Activated CD4-positive, alpha-beta T cell treated with anti-CD3 and anti-CD28 coated beads, Interleukin-2, amount 10 ng/mL, durations not matched to agents 24 days and 14 days (primary cell): ENCODE measurements at regions of chr2 and their contacts with region 1.

Region 1: GRCh38 chr2:85266146-85267041 is 61.4 kb downstream of the TGOLN2 start:
- DNase-seq: peak; percentile 91
- H3K4me3 Mint-ChIP-seq: no peak overlapping the region
- H3K27ac Mint-ChIP-seq: no peak overlapping the region
- H3K4me1 Mint-ChIP-seq: peaks cover 2% of the 10 kb centered on the region
- H3K27me3 Mint-ChIP-seq: peaks cover 29% of the 10 kb centered on the region

Region 2: DNA sequence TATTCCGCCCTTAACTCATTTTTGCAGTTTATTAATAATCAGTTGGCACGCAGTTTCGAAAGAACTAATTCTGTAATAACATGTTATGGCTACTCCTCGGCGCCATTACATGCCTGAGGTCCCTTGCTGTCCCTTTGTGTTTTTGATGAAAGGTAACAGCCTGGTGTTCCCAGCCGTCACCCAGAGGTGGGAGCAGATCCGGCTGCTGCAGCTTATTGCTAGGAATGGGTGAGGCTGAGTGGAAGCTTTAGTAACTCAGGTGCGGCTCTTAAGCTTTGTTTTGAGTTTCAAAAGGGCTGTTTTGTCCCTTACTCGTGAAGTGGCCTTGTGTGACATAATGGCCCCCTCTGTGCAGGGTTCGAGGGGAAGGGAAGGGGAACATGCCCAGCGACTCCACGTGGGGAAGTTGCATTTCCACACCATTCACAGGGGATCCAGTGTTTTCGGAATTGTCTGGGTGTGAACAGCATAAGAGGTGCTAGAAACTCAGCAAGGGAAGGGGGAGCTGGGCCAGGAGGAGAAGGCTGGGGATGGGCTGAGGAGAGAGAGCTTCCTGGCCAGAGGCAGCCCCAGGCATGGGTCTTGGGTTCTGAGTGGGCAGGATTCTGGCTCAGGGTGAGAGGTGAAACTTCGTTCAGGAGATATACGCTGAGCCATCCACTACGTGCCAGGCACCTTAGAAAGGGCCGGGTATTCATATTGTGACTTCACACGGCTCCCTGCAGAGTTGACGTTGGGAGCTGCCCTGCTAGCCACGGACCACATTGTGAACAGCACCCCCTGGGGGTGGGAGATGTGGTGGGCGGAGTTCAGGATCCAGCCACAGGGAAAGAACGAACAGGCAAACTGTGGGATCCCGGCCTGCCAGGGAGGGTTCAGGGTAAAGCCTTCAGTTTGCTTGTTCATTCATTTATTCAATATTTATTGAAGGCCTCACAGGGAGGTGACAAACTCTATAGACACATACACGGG is 23.0 kb before region 1 on chr2:
- intact Hi-C with region 1: no loop called
- DNase-seq: peak; percentile 73
- H3K4me3 Mint-ChIP-seq: no peak overlapping the region
- H3K27ac Mint-ChIP-seq: no peak overlapping the region
- H3K4me1 Mint-ChIP-seq: peaks cover 8% of the 10 kb centered on the region
- H3K27me3 Mint-ChIP-seq: peaks cover 20% of the 10 kb centered on the region

Region 3: DNA sequence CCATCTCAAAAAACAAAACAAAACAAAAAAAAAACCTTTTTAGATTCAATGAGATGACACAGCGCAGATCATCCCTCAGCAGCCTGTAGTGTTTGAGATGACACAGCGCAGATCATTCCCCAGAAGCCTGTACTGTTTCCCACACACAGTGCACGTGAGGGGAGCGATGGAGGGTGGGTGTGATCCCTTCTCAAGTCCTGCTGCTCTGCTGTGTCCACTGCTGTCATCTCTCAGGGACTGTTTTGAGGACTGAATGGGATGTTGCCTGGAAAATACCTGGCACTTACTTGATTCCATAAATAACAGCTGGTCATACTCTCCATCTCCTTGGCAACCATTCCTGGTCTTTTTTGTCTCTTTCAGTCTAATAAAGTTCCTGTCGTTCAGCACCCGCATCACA is 35.7 kb after region 1 on chr2:
- intact Hi-C with region 1: loop called (anchors 1 kb)
- DNase-seq: no peak
- H3K4me3 Mint-ChIP-seq: no peak overlapping the region
- H3K27ac Mint-ChIP-seq: no peak overlapping the region
- H3K4me1 Mint-ChIP-seq: peaks cover 7% of the 10 kb centered on the region
- H3K27me3 Mint-ChIP-seq: peaks cover 25% of the 10 kb centered on the region